MCF 10A (cell line): ENCODE measurements at regions of chr12 and their contacts with region 1.

Region 1: DNA sequence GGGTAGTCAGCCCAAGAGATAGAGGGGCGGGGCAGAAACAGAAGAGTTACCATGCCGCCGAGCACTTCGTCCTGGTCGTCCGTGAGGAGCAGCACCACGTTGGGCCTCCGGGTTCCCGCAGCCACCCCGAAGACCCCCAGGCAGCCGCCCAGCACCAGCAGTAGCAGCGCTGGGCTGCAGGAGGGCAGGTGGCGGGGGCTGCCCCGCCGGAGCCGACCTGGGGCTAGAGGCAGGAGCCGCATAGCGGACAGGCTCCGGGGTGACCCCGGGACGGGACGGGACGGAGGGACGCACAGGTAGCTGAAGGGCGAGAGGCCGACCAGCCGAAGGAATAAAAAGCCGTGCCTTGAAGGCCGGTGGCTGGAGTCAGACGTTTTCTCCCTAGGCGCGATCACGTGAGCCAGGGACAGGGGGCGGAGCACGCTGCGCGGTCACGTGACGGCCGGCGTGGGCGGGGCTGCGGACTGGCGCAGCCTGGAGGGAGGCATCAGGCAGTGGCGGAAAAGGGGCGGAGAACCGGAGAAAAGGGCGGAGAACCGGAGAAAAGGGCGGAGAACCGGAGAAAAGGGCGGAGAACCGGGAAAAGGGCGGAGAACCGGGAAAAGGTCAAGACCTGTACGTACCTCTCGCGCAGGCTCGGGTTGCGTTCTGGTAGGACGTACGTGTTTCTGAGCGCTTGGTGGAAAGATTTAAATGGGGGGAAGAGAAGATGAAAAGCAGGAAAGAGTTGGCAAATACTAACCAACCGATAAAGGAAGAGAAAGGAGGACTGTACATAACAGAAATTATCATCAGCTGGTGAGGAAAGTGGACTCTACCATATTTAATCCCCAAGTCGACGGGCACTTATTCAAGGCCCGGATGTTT is at the start of gene GNS:
- DNase-seq: peak; percentile 92
- H3K4me3 Mint-ChIP-seq: peak within 1 kb of the TSS; percentile 91
- H3K27ac Mint-ChIP-seq: peak within 1 kb of the TSS; percentile 91
- H3K4me1 Mint-ChIP-seq: peaks cover 10% of the 10 kb centered on the region
- H3K27me3 Mint-ChIP-seq: no peaks in the 10 kb centered on the region
- CTCF ChIP-seq: no peak
- total RNA-seq, gene GNS: 54.7 and 60.8 TPM in 2 replicates

Region 2: GRCh38 chr12:64733857-64734256 is 25.4 kb before region 1 on chr12:
- CTCF ChIA-PET with region 1: interaction called, 3 read pairs
- POLR2A ChIA-PET with region 1: interaction called, 12 read pairs
- intact Hi-C with region 1: no loop called
- DNase-seq: peak; percentile 99
- H3K4me3 Mint-ChIP-seq: peak overlapping the region; percentile 7
- H3K27ac Mint-ChIP-seq: peak overlapping the region; percentile 2
- H3K4me1 Mint-ChIP-seq: peaks cover 23% of the 10 kb centered on the region
- H3K27me3 Mint-ChIP-seq: no peaks in the 10 kb centered on the region
- CTCF ChIP-seq: no peak